ENCODE measurements at regions of chr13 and their contacts with region 1.

Region 1: DNA sequence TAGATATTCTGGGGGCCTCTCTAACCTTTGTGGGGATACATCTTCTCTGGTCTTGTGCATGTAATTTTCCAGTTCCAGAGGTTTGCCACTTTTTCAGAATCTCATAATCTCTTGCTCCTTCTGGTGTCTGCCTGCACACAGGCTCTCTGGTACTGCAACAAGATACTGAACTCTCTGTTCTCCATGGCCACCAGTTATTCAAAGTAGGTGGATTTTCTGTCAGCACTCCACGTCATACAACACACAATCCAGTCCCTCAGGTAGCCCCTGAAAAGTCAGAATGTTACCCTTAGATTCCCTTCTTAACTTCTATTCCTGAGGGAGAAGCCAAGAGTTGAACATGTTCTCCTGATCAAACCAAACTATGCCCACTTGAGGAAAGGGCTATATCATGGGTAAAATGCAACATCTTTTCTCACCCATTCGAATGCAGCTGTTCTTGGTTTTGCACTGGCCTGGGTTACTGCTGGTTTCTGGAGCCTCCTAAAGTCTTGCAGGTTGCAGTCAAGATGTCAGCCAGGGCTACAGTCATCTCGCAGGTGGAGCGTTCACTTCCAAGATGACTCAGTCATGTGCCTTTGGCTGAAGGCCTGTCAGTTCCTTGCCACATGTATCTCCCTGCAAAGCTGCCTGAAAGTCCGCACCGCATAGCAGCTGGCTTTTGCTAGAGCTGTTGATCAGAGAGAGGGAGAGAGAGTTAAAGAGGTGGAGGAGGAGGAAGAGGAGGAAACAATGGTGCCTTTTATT is 57.7 kb upstream of the TUBA3C start:
- DNase-seq: no peak
- CTCF ChIP-seq: no peak

Region 2: GRCh38 chr13:18628417-18628816 is 610.9 kb before region 1 on chr13:
- in situ Hi-C with region 1: no loop called
- DNase-seq: no peak
- CTCF ChIP-seq: no peak

Region 3: GRCh38 chr13:19148561-19148960 is 90.7 kb before region 1 on chr13:
- in situ Hi-C with region 1: loop called (anchors 25 kb)
- DNase-seq: no peak
- CTCF ChIP-seq: no peak

Region 4: GRCh38 chr13:19587635-19588300 is 348.5 kb after region 1 on chr13:
- in situ Hi-C with region 1: loop called (anchors 25 kb)
- DNase-seq: peak; percentile 48
- CTCF ChIP-seq: peak; percentile 53

Measured in GM13976 (cell line).